GM10248 (cell line): ENCODE measurements at regions of chr3 and their contacts with region 1.

Region 1: DNA sequence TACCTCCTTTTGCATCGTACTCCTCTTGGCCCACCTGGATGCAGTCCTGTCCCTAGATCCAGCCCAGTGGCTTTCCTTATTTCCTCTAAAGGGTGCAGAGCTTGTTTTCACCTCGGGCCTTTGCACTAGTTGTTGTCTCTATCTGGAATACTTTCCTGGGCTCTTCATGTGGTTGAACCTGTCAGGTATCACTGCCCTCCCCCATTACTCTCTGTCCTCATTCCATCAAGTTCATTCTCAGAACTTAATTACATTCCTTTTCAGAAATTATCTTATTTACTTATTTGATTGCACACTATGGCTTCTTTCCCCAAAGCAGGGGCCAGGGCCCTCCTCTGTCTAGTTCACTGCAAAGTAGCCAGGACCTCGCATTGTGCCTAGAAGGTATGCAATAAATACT is 4.2 kb downstream of the THOC7 start:
- DNase-seq: no peak
- CTCF ChIP-seq: no peak

Region 2: GRCh38 chr3:63870615-63871215 is 11.3 kb after region 1 on chr3:
- CTCF ChIA-PET with region 1: interaction called, 11 read pairs
- POLR2A ChIA-PET with region 1: no interaction called
- DNase-seq: no peak
- CTCF ChIP-seq: no peak

Region 3: GRCh38 chr3:63975723-63976122 is 116.4 kb after region 1 on chr3:
- CTCF ChIA-PET with region 1: no interaction called
- POLR2A ChIA-PET with region 1: no interaction called
- DNase-seq: no peak
- CTCF ChIP-seq: no peak